ENCODE measurements at regions of chr20 and their contacts with region 1.

Region 1: GRCh38 chr20:44950368-44950767 is 9.8 kb downstream of the TOMM34 start:
- DNase-seq: no peak

Region 2: DNA sequence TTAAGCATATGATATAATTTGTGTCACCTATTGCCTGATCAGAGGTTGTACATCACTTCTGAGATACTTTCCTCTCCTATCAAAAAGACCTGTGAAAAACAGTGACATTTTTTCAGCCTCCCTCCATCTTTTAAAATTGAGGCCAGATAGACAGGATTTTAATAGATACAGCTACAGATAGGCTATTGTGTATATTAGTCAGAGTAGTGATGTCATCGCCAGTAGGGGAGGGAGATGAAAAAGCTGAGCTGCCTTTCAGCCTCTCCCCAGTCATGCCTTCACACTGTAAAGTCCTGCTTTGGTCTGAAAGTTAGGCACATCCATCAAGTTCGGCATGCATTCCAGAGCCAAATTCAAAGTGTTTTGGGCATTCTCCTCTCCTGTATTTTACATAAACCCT is 48.4 kb before region 1 on chr20:
- intact Hi-C with region 1: loop called in 1 of 2 experiments (anchors 2 kb)
- DNase-seq: no peak

Measured in posterior vena cava (tissue), 2 donors.